ENCODE measurements at regions of chr15 and their contacts with region 1.

Region 1: DNA sequence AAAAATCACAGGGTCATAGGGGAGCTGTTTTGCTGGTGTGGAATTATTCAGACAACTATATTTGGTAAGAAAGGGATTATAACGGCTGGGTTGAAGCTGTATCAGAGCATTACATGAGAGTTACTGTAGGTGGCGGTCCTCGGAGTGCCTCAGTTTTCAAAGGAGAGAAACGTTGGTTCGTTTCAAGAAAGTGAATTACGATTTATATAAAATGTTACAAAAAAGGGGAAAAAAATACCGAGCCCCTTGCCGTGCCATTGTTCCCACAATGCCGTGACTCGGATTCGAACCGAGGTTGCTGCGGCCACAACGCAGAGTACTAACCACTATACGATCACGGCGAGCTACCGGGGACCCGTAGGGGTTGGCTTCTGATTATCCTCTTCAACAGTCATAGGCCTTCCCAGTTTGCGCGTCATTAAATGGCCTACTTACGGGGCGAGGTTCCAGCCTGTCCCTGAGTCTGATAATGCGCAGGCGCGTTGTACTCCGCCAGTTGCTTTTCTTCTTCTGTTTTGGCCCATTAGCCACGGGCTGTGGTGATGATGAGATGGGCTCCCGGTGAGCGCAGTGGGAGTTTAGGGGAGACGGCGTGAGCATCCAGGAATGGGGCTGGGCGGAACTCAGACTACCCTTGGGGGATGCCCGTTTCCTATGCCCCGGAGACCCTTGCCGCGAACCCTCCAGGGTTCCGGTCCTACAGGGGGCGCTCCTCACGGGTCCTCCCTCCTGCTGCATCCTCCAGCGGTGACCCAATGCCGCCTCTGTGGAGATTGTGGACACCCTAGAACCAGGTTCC is 10.8 kb upstream of the SHF start:
- DNase-seq: peak; percentile 99
- H3K4me3 Mint-ChIP-seq: no peak overlapping the region
- H3K27ac Mint-ChIP-seq: no peak overlapping the region
- H3K4me1 Mint-ChIP-seq: peaks cover 9% of the 10 kb centered on the region
- H3K27me3 Mint-ChIP-seq: no peaks in the 10 kb centered on the region

Region 2: DNA sequence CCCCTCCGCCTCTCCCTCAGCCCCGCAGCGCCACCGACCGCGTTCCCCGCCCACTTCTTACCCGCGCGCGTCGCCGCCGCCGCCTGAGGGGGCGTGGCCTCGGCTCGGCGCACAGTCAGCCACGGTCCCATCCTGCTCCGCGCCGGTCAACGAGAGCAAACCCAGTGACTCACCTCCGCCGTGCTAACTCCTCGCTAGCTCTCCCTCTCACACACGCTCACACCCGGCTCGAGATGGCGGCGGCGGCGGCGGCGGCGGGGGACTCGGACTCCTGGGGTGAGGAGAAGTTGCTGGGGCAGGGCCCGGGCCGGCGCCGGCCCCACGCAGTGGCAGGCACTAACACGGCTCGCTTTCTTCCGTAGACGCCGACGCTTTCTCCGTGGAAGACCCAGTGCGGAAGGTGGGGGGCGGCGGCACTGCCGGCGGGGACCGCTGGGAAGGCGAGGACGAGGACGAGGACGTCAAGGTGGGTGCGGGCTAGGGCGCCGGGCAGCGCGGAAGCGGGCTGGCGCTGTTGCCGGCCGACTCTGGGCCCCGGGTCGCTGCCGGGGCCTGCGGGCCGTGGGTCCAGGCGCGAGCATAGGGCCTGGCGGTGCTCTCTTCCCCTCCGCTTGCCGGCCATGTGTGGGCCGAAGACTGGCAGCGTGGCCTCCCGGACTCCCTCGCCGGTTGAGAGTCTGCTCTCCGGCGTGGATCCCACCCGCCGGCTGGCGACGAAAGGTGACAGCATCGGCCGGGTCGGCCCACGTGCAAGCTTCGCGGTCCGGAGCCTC is 661.4 kb before region 1 on chr15 and contains the start of gene EIF3J:
- intact Hi-C with region 1: loop called (anchors 5 kb)
- DNase-seq: peak; percentile 98
- H3K4me3 Mint-ChIP-seq: peak within 1 kb of the TSS; percentile 84
- H3K27ac Mint-ChIP-seq: peak within 1 kb of the TSS; percentile 96
- H3K4me1 Mint-ChIP-seq: peaks cover 43% of the 10 kb centered on the region
- H3K27me3 Mint-ChIP-seq: no peaks in the 10 kb centered on the region
- total RNA-seq, gene EIF3J: 161 and 166 TPM in 2 replicates

Region 3: GRCh38 chr15:45156744-45157455 is 41.6 kb before region 1 on chr15:
- intact Hi-C with region 1: no loop called
- DNase-seq: no peak
- H3K4me3 Mint-ChIP-seq: no peak overlapping the region
- H3K27ac Mint-ChIP-seq: peak overlapping the region; percentile 3
- H3K4me1 Mint-ChIP-seq: peaks cover 15% of the 10 kb centered on the region
- H3K27me3 Mint-ChIP-seq: no peaks in the 10 kb centered on the region

Region 4: DNA sequence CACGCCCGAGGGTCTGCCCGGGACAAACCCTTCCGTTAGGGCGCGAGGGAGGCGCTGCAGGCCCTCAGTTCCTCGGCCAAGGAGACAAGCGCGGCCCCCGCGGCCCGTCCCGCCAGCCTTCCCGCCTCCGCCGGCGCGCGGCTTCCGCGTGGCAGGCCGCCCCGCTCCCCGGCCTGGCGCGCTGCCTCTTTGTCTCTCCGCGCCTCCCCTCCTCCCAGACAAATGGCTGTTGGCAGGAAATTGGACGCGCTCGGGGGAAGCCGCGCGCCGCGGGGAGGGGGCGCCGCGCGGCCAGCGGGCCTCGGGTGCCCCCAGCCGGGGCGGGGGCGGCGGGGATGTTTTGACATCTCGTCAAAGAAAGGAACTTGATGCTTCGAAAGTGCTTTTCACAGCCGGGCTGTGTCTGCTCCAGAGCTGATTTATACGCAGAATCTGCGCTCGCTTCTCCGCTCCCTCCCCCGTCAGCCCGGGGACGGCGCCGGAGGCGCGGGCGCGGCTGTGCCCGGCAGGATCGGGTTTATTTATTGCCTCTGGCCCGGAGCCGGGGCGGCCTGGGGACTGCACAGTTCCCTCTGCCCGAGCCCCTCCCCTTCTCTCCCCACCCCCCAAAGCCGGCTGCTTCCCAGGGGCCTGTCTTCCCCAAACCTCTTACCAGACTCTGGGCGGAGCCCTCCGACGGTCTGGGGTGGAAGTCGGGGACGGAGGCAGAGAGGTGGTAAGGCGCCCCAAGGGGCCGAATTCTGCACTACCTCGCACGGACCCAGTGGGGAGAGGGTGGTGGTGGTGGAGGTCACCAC is 31.5 kb before region 1 on chr15:
- intact Hi-C with region 1: loop called (anchors 1 kb)
- DNase-seq: peak; percentile 94
- H3K4me3 Mint-ChIP-seq: peak overlapping the region; percentile 73
- H3K27ac Mint-ChIP-seq: peak overlapping the region; percentile 84
- H3K4me1 Mint-ChIP-seq: peaks cover 19% of the 10 kb centered on the region
- H3K27me3 Mint-ChIP-seq: no peaks in the 10 kb centered on the region

Region 5: GRCh38 chr15:45279024-45279698 is 80.6 kb after region 1 on chr15:
- intact Hi-C with region 1: loop called (anchors 1 kb)
- DNase-seq: peak; percentile 99
- H3K4me3 Mint-ChIP-seq: peak overlapping the region; percentile 84
- H3K27ac Mint-ChIP-seq: peak overlapping the region; percentile 83
- H3K4me1 Mint-ChIP-seq: peaks cover 15% of the 10 kb centered on the region
- H3K27me3 Mint-ChIP-seq: peaks cover 6% of the 10 kb centered on the region

Region 6: DNA sequence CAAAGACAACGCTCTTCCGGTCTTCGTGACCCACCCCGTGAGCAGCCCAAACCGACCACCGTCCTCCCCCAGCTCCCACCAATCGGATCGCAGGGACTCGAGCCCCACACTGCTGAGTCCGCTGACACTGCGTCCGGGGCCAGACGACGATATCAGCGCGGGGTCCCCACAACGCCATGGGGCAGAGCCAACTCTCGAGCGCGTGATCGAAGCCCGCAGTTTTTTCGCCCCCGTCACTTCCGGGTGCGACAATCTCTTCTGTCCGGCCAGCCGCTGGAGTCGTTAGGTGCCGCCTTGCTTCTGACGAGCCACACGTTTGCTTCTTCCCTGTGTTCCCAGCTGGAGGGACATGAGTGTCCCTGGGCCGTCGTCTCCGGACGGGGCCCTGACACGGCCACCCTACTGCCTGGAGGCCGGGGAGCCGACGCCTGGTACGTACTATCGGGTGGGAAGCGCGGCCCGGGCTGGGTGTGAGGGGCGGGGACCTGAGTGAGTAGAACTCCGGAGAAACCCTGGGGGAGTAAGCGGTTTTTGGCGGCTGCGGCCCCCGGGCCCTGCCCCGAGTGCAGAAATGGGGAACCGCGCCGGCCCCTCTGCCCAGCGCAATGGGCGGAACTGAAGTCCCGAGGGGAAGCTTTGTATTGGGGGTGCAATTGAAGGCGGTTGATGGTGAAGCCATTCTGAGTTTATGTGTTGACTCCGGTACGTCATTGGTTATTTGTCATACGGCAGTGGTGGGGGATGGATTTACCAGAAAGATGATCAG is 388.7 kb after region 1 on chr15 and contains the start of gene BLOC1S6:
- intact Hi-C with region 1: loop called (anchors 1 kb)
- DNase-seq: peak; percentile 96
- H3K4me3 Mint-ChIP-seq: peak within 1 kb of the TSS; percentile 99
- H3K27ac Mint-ChIP-seq: peak within 1 kb of the TSS; percentile 100
- H3K4me1 Mint-ChIP-seq: peaks cover 31% of the 10 kb centered on the region
- H3K27me3 Mint-ChIP-seq: no peaks in the 10 kb centered on the region
- total RNA-seq, gene BLOC1S6: 42.8 and 44.8 TPM in 2 replicates